ENCODE measurements at regions of chr19 and their contacts with region 1.

Region 1: GRCh38 chr19:18117692-18118378 is 20.3 kb downstream of the MAST3 start:
- DNase-seq: peak; percentile 95
- H3K4me3 Mint-ChIP-seq: peak overlapping the region; percentile 84
- H3K27ac Mint-ChIP-seq: peak overlapping the region; percentile 93
- H3K4me1 Mint-ChIP-seq: peaks cover 31% of the 10 kb centered on the region
- H3K27me3 Mint-ChIP-seq: no peaks in the 10 kb centered on the region

Region 2: DNA sequence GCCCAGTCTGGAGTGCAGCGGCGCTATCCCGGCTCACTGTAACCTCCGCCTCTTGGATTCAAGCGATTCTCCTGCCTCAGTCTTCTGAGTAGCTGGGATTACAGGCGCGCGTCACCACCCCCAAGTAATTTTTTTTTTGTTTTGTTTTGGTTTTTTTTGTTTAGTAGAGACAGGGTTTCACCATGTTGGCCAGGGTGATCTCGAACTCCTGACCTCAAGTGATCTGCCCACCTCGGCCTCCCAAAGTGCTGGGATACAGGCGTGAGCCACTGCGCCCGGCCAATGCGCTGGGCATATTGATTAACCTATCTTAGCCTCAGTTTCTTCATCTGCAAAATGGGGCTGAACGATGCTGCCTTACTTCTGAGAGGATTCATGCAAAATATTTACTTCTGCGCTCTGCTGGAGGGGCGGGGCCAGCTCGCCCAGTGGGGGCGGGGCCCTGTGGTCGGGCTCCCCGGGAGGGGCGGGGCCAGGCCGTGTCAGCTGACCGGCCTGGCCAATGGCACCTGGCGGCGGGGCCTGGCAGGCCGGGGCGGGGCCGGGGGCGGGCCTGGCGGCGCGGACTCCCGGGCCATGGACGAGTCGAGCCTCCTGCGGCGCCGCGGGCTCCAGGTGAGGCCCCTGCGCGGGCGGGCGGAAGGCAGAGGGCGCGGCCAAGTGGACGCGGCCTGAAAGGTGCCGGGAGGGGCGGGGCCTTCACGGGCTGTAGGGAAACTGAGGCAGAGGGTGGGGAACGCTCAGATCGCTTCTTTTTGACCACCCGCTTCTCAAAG is 20.4 kb before region 1 on chr19 and contains the start of gene MAST3:
- intact Hi-C with region 1: loop called (anchors 1 kb)
- DNase-seq: peak; percentile 91
- H3K4me3 Mint-ChIP-seq: peak within 1 kb of the TSS; percentile 85
- H3K27ac Mint-ChIP-seq: no peak within 1 kb of the TSS
- H3K4me1 Mint-ChIP-seq: peaks cover 36% of the 10 kb centered on the region
- H3K27me3 Mint-ChIP-seq: peaks cover 6% of the 10 kb centered on the region
- total RNA-seq, gene MAST3: 16.5 and 17.6 TPM in 2 replicates

Region 3: DNA sequence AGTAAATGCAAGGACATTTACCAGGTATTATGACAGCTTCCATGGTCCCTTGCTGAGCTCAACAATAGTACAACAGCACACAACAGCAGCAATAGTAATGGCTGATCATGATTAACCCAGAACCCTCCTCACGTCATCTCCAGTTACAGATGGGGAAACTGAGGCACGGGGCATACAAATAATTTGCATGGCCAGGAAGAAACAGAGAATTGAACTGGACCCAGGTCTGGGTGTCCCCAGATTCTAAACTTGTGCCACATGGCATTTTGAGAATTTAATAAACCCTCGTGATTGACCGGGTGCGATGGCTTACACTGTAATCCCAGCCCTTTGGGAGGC is 13.1 kb before region 1 on chr19:
- intact Hi-C with region 1: loop called (anchors 1 kb)
- DNase-seq: no peak
- H3K4me3 Mint-ChIP-seq: peak overlapping the region; percentile 70
- H3K27ac Mint-ChIP-seq: no peak overlapping the region
- H3K4me1 Mint-ChIP-seq: peaks cover 16% of the 10 kb centered on the region
- H3K27me3 Mint-ChIP-seq: no peaks in the 10 kb centered on the region

Region 4: GRCh38 chr19:18152444-18152816 is 34.6 kb after region 1 on chr19:
- intact Hi-C with region 1: loop called (anchors 1 kb)
- DNase-seq: peak; percentile 95
- H3K4me3 Mint-ChIP-seq: peak overlapping the region; percentile 84
- H3K27ac Mint-ChIP-seq: peak overlapping the region; percentile 96
- H3K4me1 Mint-ChIP-seq: peaks cover 23% of the 10 kb centered on the region
- H3K27me3 Mint-ChIP-seq: peaks cover 3% of the 10 kb centered on the region

Region 5: GRCh38 chr19:18167975-18168645 is 50.3 kb after region 1 on chr19:
- intact Hi-C with region 1: loop called (anchors 1 kb)
- DNase-seq: peak; percentile 54
- H3K4me3 Mint-ChIP-seq: no peak overlapping the region
- H3K27ac Mint-ChIP-seq: no peak overlapping the region
- H3K4me1 Mint-ChIP-seq: peaks cover 4% of the 10 kb centered on the region
- H3K27me3 Mint-ChIP-seq: peaks cover 3% of the 10 kb centered on the region

Region 6: GRCh38 chr19:18251587-18252369 is 133.9 kb after region 1 on chr19:
- intact Hi-C with region 1: loop called (anchors 1 kb)
- DNase-seq: peak; percentile 66
- H3K4me3 Mint-ChIP-seq: no peak overlapping the region
- H3K27ac Mint-ChIP-seq: peak overlapping the region; percentile 18
- H3K4me1 Mint-ChIP-seq: no peaks in the 10 kb centered on the region
- H3K27me3 Mint-ChIP-seq: peaks cover 16% of the 10 kb centered on the region